Heart left ventricle (tissue), 16 donors: ENCODE measurements at regions of chr5 and their contacts with region 1.

Region 1: GRCh38 chr5:149141224-149141956 is at the start of gene ABLIM3:
- DNase-seq: peak; percentile 70 to 89 (median 77)
- ATAC-seq: peak; percentile 44 to 90 (median 82)
- H3K4me3 ChIP-seq: peak within 1 kb of the TSS; percentile 66 to 92 (median 80)
- H3K27ac ChIP-seq: peak within 1 kb of the TSS; percentile 78 to 97 (median 92)
- H3K4me1 ChIP-seq: peaks cover 0 to 54% (median 31%) of the 10 kb centered on the region in 12 donors
- H3K27me3 ChIP-seq: no peaks in the 10 kb centered on the region
- CTCF ChIP-seq: peak; percentile 91 to 99 (median 95)
- POLR2A ChIP-seq: peak in 1 of 2 donors; percentile 43
- total RNA-seq, gene ABLIM3: 70.0 to 175 (median 97.8) TPM

Region 2: GRCh38 chr5:149175346-149176105 is 34.1 kb after region 1 on chr5:
- intact Hi-C with region 1: loop called in 4 of 10 experiments (anchors 5 kb)
- DNase-seq: peak; percentile 65 to 89 (median 79)
- ATAC-seq: peak; percentile 85 to 91 (median 90)
- H3K4me3 ChIP-seq: no peak overlapping the region
- H3K27ac ChIP-seq: peak overlapping the region; percentile 74 to 90 (median 84)
- H3K4me1 ChIP-seq: peaks cover 16 to 95% (median 73%) of the 10 kb centered on the region in 12 donors
- H3K27me3 ChIP-seq: no peaks in the 10 kb centered on the region
- CTCF ChIP-seq: no peak
- POLR2A ChIP-seq: no peak

Region 3: DNA sequence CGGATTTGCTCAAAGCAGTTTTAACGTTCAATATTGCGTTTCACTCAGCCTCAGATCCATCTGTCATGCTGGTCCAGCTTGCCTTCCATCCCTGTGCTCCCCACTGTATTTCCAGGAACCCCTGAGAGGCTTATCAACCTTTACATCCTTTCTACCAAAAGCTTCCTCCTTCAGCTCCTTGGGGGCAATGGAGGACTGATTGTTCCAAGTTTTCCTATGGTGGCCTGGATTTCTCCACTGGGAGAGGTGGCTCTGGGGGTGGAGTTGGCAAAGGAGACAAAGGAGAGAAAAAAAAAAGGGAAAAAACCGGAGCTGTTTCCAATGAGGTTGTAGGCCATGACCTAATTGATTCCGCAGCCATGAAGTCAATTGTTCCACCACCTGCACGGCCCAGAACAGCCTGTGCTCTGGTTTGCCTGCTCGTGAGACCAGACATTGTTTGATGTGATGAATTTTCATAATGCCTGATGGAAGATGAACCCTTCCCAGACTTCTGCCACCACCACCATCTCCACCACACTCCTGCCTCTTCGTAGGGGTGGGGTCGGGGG is 54.0 kb after region 1 on chr5:
- intact Hi-C with region 1: loop called in 2 of 10 experiments (anchors 5 kb)
- DNase-seq: peak; percentile 50 to 68 (median 62)
- ATAC-seq: peak; percentile 85 to 90 (median 88)
- H3K4me3 ChIP-seq: no peak overlapping the region
- H3K27ac ChIP-seq: peak overlapping the region; percentile 47 to 86 (median 83)
- H3K4me1 ChIP-seq: peaks cover 3 to 53% (median 28%) of the 10 kb centered on the region in 12 donors
- H3K27me3 ChIP-seq: no peaks in the 10 kb centered on the region
- CTCF ChIP-seq: no peak
- POLR2A ChIP-seq: no peak

Region 4: GRCh38 chr5:149205625-149206523 is 64.5 kb after region 1 on chr5:
- intact Hi-C with region 1: no loop called
- DNase-seq: peak in 3 of 5 donors; percentile 36 to 69 (median 65)
- ATAC-seq: peak in 3 of 4 donors; percentile 21 to 75 (median 65)
- H3K4me3 ChIP-seq: no peak overlapping the region
- H3K27ac ChIP-seq: peak overlapping the region in 11 of 12 donors; percentile 6 to 61 (median 28)
- H3K4me1 ChIP-seq: peaks cover 0 to 57% (median 33%) of the 10 kb centered on the region in 12 donors
- H3K27me3 ChIP-seq: no peaks in the 10 kb centered on the region
- CTCF ChIP-seq: no peak
- POLR2A ChIP-seq: no peak

Region 5: DNA sequence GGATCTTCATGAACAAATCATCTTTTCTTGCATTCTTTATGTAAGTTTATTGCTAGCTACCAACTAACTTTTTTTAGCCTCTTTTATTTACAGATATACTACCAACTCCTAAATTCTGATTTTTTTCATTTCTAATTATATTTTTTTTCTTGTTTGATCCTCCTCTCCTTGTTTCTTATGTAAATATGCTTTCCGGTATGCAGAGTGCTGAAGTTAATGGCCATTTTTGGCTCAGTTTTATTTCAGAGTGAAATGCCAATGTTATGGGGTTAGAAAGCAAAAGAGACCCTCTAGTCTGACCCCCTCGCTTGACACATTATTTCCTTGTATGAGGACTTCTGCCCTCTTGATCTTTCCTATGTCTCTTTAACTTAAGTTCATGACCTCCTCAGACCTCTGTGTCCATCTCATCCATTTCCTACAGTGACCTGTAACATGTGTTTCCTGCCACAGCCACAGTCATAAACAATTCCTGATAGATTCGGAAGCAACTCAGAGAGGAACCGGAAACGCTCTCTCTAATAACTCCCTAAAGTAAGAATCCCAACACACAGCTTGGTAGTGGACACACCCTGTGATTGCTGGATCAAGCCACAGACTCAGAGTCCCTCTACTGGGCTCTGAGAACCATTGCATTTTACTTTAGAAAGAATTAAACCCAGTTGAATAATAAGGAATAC is 87.4 kb after region 1 on chr5:
- intact Hi-C with region 1: loop called in 9 of 10 experiments (anchors 1 to 5 kb)
- DNase-seq: peak in 4 of 5 donors; percentile 54 to 72 (median 66)
- ATAC-seq: peak; percentile 87 to 94 (median 92)
- H3K4me3 ChIP-seq: no peak overlapping the region
- H3K27ac ChIP-seq: peak overlapping the region; percentile 11 to 78 (median 64)
- H3K4me1 ChIP-seq: peaks cover 0 to 40% (median 21%) of the 10 kb centered on the region in 12 donors
- H3K27me3 ChIP-seq: no peaks in the 10 kb centered on the region
- CTCF ChIP-seq: peak; percentile 52 to 89 (median 84)
- POLR2A ChIP-seq: no peak

Region 6: GRCh38 chr5:149576021-149576420 is 434.6 kb after region 1 on chr5:
- intact Hi-C with region 1: loop called in 1 of 10 experiments (anchors 10 kb)
- DNase-seq: no peak
- ATAC-seq: no peak
- H3K4me3 ChIP-seq: no peak overlapping the region
- H3K27ac ChIP-seq: no peak overlapping the region
- H3K4me1 ChIP-seq: peaks cover 0 to 19% (median 6%) of the 10 kb centered on the region in 12 donors
- H3K27me3 ChIP-seq: peaks cover 0 to 3% (median 0%) of the 10 kb centered on the region in 9 donors
- CTCF ChIP-seq: no peak
- POLR2A ChIP-seq: no peak